OCI-LY7 (cell line): ENCODE measurements at regions of chr11 and their contacts with region 1.

Region 1: DNA sequence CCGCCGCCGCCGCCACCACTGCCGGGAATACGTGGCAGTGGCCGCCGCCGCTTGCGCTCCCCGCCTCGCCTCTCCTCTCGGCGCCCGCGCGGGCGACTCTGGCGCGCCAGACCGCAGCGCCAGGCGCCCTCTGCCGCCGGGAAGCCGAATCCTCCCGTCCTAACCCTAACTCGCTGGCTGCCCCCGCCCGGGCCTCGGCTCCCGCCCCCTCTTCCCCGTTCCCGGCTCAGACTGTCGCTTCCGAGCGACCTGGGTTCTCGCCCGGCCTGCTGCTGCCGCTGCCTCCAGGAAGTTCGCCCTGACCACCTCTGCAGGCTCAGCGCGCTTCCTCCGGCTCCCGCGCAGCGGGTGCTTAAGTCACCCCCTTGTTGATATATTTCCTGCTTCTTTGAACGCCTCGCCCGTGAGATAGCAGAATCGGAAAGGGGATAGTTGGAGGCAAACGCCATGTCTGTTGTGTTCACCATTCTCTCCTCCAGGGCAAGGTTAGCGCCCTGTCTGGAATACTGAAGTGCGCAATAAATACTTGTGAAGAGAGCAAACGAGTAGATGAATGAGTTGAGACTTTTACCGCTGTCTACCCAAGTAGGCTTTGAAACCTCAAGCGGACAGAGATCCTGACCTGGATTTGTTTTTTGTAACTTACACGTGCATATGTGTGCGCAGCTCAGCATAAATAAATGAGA is at the start of gene SMCO4:
- DNase-seq: peak; percentile 85
- H3K4me3 ChIP-seq: peak within 1 kb of the TSS; percentile 89
- H3K27ac ChIP-seq: peak within 1 kb of the TSS; percentile 55
- H3K4me1 ChIP-seq: peaks cover 31% of the 10 kb centered on the region
- CTCF ChIP-seq: peak; percentile 72
- total RNA-seq, gene SMCO4: 36.1 and 44.7 TPM in 2 replicates

Region 2: GRCh38 chr11:92911478-92911877 is 632.0 kb before region 1 on chr11:
- CTCF ChIA-PET with region 1: no interaction called
- POLR2A ChIA-PET with region 1: no interaction called
- intact Hi-C with region 1: no loop called
- DNase-seq: no peak
- H3K4me3 ChIP-seq: no peak overlapping the region
- H3K27ac ChIP-seq: no peak overlapping the region
- H3K4me1 ChIP-seq: no peaks in the 10 kb centered on the region
- CTCF ChIP-seq: no peak

Region 3: GRCh38 chr11:93288079-93288478 is 255.4 kb before region 1 on chr11:
- CTCF ChIA-PET with region 1: no interaction called
- POLR2A ChIA-PET with region 1: no interaction called
- intact Hi-C with region 1: loop called (anchors 1 kb)
- DNase-seq: peak; percentile 74
- H3K4me3 ChIP-seq: no peak overlapping the region
- H3K27ac ChIP-seq: peak overlapping the region; percentile 63
- H3K4me1 ChIP-seq: peaks cover 17% of the 10 kb centered on the region
- CTCF ChIP-seq: no peak

Region 4: GRCh38 chr11:93468290-93468689 is 75.1 kb before region 1 on chr11:
- CTCF ChIA-PET with region 1: no interaction called
- POLR2A ChIA-PET with region 1: interaction called, 3 read pairs
- intact Hi-C with region 1: loop called (anchors 2 kb)
- DNase-seq: no peak
- H3K4me3 ChIP-seq: no peak overlapping the region
- H3K27ac ChIP-seq: no peak overlapping the region
- H3K4me1 ChIP-seq: peaks cover 16% of the 10 kb centered on the region
- CTCF ChIP-seq: no peak

Region 5: DNA sequence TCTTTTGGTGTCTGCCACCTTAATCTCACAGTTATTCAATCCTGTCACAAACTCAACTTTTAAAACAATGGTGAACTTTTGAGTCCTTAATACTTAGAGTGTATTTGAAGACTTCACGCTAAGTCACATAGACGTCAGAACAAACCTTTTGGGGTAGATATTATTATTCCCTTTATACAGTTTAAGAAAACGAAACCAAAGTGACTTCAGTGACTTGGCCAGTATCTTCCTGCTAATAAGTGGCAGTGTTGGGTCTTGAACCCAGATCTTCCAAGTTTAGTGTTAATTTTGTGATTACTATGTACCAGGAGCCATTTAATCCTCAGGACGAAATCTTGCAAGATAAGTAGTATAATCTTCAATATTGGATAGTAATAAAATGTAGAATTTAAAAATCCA is 118.7 kb after region 1 on chr11:
- CTCF ChIA-PET with region 1: no interaction called
- POLR2A ChIA-PET with region 1: interaction called, 4 read pairs
- intact Hi-C with region 1: loop called (anchors 5 kb)
- DNase-seq: peak; percentile 34
- H3K4me3 ChIP-seq: peak overlapping the region; percentile 97
- H3K27ac ChIP-seq: peak overlapping the region; percentile 78
- H3K4me1 ChIP-seq: peaks cover 28% of the 10 kb centered on the region
- CTCF ChIP-seq: no peak